CD4-positive, alpha-beta memory T cell (primary cell): ENCODE measurements at regions of chr7 and their contacts with region 1.

Region 1: DNA sequence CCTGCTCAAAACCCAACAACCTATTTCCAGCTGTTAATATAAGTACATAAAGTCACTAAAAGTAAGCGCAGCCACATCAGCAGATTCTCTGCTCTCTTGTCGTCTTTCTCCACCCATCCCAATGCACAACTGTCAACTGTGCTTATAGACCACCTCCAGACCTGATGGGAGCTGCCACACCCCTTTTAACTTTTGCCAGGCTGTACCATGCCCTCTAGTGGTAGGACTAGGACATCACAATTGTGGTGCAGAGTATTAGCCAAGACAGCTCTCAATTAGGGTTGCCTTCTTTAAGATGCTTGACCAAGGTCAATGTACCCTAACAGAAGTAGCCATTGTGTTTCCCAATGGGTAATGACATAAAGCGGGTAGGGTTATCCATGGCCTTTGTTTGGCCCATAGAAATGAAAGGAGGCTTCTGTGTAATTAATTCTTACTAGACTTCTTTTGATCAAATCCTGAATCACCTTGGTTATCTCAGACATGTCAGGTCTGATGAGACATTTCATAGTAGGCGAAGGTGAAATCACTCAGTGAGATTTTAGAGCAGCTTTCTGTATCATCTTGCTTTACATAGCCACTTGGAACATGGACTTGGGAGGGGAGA is 68.1 kb downstream of the SCRN1 start:
- DNase-seq: peak; percentile 24 to 59 (median 41)
- H3K4me3 ChIP-seq: no peak overlapping the region
- H3K4me3 Mint-ChIP-seq: no peak overlapping the region
- H3K27ac ChIP-seq: no peak overlapping the region
- H3K27ac Mint-ChIP-seq: no peak overlapping the region
- H3K4me1 ChIP-seq: no peaks in the 10 kb centered on the region
- H3K4me1 Mint-ChIP-seq: no peaks in the 10 kb centered on the region
- H3K27me3 ChIP-seq: no peaks in the 10 kb centered on the region
- H3K27me3 Mint-ChIP-seq: peaks cover 7% of the 10 kb centered on the region in 2 donors

Region 2: GRCh38 chr7:29878081-29878688 is 43.3 kb before region 1 on chr7:
- CTCF ChIA-PET with region 1: interaction called, 3 read pairs
- POLR2A ChIA-PET with region 1: no interaction called
- intact Hi-C with region 1: loop called (anchors 2 kb)
- DNase-seq: peak in 4 of 5 donors; percentile 6 to 12 (median 10)
- H3K4me3 ChIP-seq: no peak overlapping the region
- H3K4me3 Mint-ChIP-seq: no peak overlapping the region
- H3K27ac ChIP-seq: no peak overlapping the region
- H3K27ac Mint-ChIP-seq: no peak overlapping the region
- H3K4me1 ChIP-seq: no peaks in the 10 kb centered on the region
- H3K4me1 Mint-ChIP-seq: peaks cover 3 to 5% (median 3%) of the 10 kb centered on the region in 4 donors
- H3K27me3 ChIP-seq: no peaks in the 10 kb centered on the region
- H3K27me3 Mint-ChIP-seq: peaks cover 9 to 18% of the 10 kb centered on the region in 2 donors

Region 3: GRCh38 chr7:29906200-29907022 is 15.1 kb before region 1 on chr7:
- CTCF ChIA-PET with region 1: interaction called, 14 read pairs
- POLR2A ChIA-PET with region 1: no interaction called
- intact Hi-C with region 1: no loop called
- DNase-seq: no peak
- H3K4me3 ChIP-seq: no peak overlapping the region
- H3K4me3 Mint-ChIP-seq: no peak overlapping the region
- H3K27ac ChIP-seq: no peak overlapping the region
- H3K27ac Mint-ChIP-seq: no peak overlapping the region
- H3K4me1 ChIP-seq: no peaks in the 10 kb centered on the region
- H3K4me1 Mint-ChIP-seq: no peaks in the 10 kb centered on the region
- H3K27me3 ChIP-seq: no peaks in the 10 kb centered on the region
- H3K27me3 Mint-ChIP-seq: peaks cover 22 to 24% of the 10 kb centered on the region in 2 donors

Region 4: GRCh38 chr7:30173058-30173897 is 251.8 kb after region 1 on chr7:
- CTCF ChIA-PET with region 1: no interaction called
- POLR2A ChIA-PET with region 1: no interaction called
- intact Hi-C with region 1: no loop called
- DNase-seq: no peak
- H3K4me3 ChIP-seq: no peak overlapping the region
- H3K4me3 Mint-ChIP-seq: no peak overlapping the region
- H3K27ac ChIP-seq: no peak overlapping the region
- H3K27ac Mint-ChIP-seq: no peak overlapping the region
- H3K4me1 ChIP-seq: no peaks in the 10 kb centered on the region
- H3K4me1 Mint-ChIP-seq: peaks cover 0 to 2% (median 0%) of the 10 kb centered on the region in 4 donors
- H3K27me3 ChIP-seq: no peaks in the 10 kb centered on the region
- H3K27me3 Mint-ChIP-seq: no peaks in the 10 kb centered on the region

Region 5: DNA sequence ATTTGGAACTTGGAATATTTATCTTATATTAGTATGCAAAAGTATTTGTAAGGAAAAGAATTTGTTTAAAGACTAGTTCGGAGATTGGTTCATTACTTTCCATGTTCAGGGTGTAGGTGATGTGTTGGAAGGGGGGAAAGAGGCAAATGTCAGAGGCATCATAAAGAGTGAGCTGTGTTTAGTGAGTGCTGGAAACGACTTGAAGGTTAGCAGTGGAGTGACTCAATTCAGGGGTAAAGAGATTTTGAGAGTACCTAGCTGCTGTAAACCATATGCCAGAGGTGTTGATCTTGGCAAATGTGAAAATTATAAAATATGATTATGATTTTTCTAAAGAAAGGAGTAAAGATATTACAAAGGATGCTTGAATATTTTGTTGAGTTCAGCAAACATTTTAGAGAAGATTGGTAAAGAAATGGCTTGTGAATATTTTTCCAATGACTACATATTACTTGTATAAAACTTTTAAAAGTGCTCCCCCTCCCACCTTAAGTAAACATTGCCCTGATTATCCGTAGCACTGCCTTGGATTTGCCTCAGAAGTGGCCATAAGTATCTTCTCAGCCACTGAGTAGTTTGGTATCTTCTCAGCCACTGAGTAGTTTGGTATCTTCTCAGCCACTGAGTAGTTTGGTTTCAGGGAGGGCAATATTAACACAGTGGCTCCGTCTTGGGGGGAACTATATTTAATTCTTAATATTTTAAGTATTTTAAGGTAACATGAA is 414.4 kb after region 1 on chr7:
- CTCF ChIA-PET with region 1: no interaction called
- POLR2A ChIA-PET with region 1: no interaction called
- intact Hi-C with region 1: no loop called
- DNase-seq: no peak
- H3K4me3 ChIP-seq: no peak overlapping the region
- H3K4me3 Mint-ChIP-seq: peak overlapping the region in 1 of 8 donors; percentile 1
- H3K27ac ChIP-seq: no peak overlapping the region
- H3K27ac Mint-ChIP-seq: peak overlapping the region in 1 of 7 donors; percentile 7
- H3K4me1 ChIP-seq: peaks cover 38% of the 10 kb centered on the region
- H3K4me1 Mint-ChIP-seq: peaks cover 43 to 78% (median 59%) of the 10 kb centered on the region in 4 donors
- H3K27me3 ChIP-seq: no peaks in the 10 kb centered on the region
- H3K27me3 Mint-ChIP-seq: no peaks in the 10 kb centered on the region